Spleen (tissue), 13 donors: ENCODE measurements at regions of chr6 and their contacts with region 1.

Region 1: GRCh38 chr6:138110229-138110628 is 3.0 kb upstream of the PERP start:
- DNase-seq: no peak
- H3K4me3 ChIP-seq: no peak overlapping the region
- H3K27ac ChIP-seq: no peak overlapping the region
- H3K4me1 ChIP-seq: peaks cover 4 to 28% (median 22%) of the 10 kb centered on the region in 6 donors
- H3K27me3 ChIP-seq: peaks cover 0 to 55% (median 30%) of the 10 kb centered on the region in 7 donors
- CTCF ChIP-seq: no peak
- POLR2A ChIP-seq: no peak

Region 2: GRCh38 chr6:138001750-138002349 is 108.4 kb before region 1 on chr6:
- intact Hi-C with region 1: loop called (anchors 2 kb)
- DNase-seq: no peak
- H3K4me3 ChIP-seq: no peak overlapping the region
- H3K27ac ChIP-seq: no peak overlapping the region
- H3K4me1 ChIP-seq: peaks cover 0 to 6% (median 0%) of the 10 kb centered on the region in 6 donors
- H3K27me3 ChIP-seq: no peaks in the 10 kb centered on the region
- CTCF ChIP-seq: peak in 10 of 11 experiments; percentile 29 to 84 (median 68)
- POLR2A ChIP-seq: no peak